ENCODE measurements at regions of chr3 and their contacts with region 1.

Region 1: DNA sequence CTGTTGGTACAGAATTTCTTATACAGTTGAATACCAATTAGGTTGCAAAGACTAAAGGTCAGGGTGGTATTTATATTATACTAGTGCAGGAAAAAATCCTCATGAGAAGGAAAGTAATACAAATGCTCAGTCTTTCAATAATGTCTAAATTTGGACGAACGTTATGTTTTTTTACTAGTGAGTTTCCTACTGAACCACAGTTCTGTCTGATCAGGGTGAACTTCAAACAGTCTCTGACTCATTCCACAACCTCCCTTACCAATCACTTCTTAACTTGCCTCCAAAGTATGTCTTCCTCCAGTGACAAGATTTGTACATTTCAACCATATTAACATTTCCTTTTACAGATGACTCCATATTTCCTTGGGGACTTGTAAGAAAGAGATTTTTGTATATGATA is 3.4 kb downstream of the TMEM212 start:
- DNase-seq: peak; percentile 76
- H3K4me3 Mint-ChIP-seq: no peak overlapping the region
- H3K27ac Mint-ChIP-seq: peak overlapping the region; percentile 17
- H3K4me1 Mint-ChIP-seq: peaks cover 17% of the 10 kb centered on the region
- H3K27me3 Mint-ChIP-seq: peaks cover 15% of the 10 kb centered on the region

Region 2: DNA sequence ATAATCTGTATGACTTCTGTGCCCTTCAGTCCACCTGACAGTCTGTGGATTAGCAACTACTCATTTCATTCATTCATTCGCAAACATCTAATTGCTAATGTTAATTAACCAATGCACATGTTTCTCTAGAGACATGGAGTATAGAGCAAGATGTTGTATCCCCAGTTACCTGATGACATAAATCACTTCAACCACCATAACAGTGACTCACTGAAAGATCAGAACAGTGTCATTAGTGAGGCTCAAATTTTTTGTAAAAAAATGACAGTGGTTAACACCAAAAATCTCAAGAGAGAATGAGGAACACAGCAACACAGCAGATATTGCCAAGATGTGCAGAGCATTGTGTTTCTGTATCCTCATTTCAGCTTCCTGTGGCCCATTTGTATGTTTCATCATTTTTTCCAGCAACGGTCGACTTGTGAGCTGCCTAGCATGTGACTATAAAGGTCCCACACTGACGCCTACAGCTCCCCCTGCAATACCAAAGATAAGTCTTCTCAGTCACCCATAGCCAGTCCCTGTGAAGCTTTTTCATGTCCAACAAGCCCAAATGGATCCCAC is 32.6 kb before region 1 on chr3:
- intact Hi-C with region 1: loop called (anchors 2 kb)
- DNase-seq: peak; percentile 59
- H3K4me3 Mint-ChIP-seq: no peak overlapping the region
- H3K27ac Mint-ChIP-seq: peak overlapping the region; percentile 64
- H3K4me1 Mint-ChIP-seq: peaks cover 18% of the 10 kb centered on the region
- H3K27me3 Mint-ChIP-seq: peaks cover 44% of the 10 kb centered on the region

Region 3: DNA sequence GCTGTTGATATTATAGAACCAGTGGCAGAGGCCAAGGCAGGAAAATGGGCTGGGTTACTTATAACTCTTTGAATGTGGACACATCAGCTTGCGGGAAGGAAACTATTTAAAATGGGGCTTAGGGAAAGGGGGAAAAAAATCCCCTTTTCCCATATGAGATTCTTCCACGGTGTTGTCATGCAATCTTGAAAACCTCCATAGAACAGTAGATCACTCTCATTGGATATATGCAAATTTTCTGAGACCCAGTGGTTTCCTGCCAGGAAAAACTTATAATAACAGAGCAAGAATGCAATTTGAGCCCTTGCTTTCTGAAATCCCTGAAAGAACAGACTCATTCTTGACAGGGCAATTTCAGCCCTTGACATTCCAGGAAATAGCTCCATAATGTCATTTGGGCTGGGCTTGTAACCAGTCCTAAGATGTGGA is 27.7 kb after region 1 on chr3:
- intact Hi-C with region 1: loop called (anchors 1 kb)
- DNase-seq: no peak
- H3K4me3 Mint-ChIP-seq: no peak overlapping the region
- H3K27ac Mint-ChIP-seq: no peak overlapping the region
- H3K4me1 Mint-ChIP-seq: peaks cover 12% of the 10 kb centered on the region
- H3K27me3 Mint-ChIP-seq: peaks cover 16% of the 10 kb centered on the region

Region 4: DNA sequence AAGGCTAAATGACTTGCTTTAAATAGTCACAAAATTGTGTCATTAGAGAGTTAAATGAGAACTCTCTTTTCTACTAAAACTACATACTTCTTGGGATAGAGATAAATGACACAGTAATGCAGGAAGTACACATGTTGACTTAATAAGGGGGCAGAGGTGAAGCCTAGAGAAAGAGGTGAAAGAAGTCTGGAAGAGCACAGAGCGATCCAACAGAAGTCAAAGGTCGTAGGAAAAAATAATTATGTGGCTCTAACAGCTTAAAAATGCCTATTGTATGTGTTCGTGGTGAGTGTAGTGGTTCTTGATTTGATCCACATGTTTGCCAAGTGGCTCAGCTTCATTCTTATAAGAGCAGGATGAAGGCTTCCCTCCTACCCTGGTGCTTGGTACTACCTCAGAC is 58.2 kb after region 1 on chr3:
- intact Hi-C with region 1: no loop called
- DNase-seq: no peak
- H3K4me3 Mint-ChIP-seq: no peak overlapping the region
- H3K27ac Mint-ChIP-seq: no peak overlapping the region
- H3K4me1 Mint-ChIP-seq: no peaks in the 10 kb centered on the region
- H3K27me3 Mint-ChIP-seq: peaks cover 7% of the 10 kb centered on the region

Region 5: GRCh38 chr3:172039436-172040077 is 193.0 kb after region 1 on chr3 and contains the start of gene FNDC3B:
- intact Hi-C with region 1: loop called (anchors 1 kb)
- DNase-seq: peak; percentile 98
- H3K4me3 Mint-ChIP-seq: peak within 1 kb of the TSS; percentile 87
- H3K27ac Mint-ChIP-seq: peak within 1 kb of the TSS; percentile 95
- H3K4me1 Mint-ChIP-seq: peaks cover 17% of the 10 kb centered on the region
- H3K27me3 Mint-ChIP-seq: peaks cover 3% of the 10 kb centered on the region
- total RNA-seq, gene FNDC3B: 19.6 and 19.9 TPM in 2 replicates

Region 6: DNA sequence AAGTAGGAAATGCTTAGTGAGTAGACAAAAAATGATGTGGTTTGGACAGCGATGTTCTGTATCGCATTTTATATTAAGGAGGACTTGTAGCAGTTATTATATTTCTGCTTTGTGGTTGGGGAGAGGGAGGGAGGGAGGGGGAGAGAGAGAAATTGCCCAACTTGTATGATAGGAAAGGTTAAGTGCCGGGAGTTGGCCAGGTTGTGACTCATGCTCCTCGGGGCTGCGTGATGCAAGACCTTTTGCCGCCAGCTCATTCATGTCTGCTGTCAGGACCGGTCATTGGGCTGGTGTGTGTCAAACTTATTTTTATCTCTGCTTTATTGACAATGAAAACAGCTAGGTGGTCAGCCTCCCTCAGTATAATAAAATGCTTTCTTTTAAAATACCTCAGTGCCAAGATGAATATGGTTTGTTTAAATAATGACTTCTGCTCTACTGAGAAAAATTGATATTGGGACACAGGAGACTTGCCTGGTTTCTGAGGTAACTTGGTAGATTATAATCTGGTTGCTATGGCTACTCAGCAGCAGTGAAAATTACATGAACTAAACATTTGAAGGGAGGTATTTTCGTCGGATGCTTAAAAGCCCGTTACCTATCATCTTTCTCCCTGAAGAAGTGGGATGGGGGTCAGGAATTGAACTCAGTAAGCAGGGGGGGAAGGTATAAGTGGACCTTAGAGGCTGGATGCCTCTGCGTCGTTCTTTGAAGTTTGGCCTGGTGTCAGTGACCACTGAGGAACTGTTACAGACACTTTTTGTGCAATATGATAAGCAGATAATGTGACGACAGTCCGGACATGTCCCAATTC is 283.5 kb after region 1 on chr3:
- intact Hi-C with region 1: loop called (anchors 5 kb)
- DNase-seq: peak; percentile 75
- H3K4me3 Mint-ChIP-seq: peak overlapping the region; percentile 30
- H3K27ac Mint-ChIP-seq: peak overlapping the region; percentile 83
- H3K4me1 Mint-ChIP-seq: peaks cover 53% of the 10 kb centered on the region
- H3K27me3 Mint-ChIP-seq: no peaks in the 10 kb centered on the region